Aorta (tissue), 5 donors: ENCODE measurements at regions of chr11 and their contacts with region 1.

Region 1: DNA sequence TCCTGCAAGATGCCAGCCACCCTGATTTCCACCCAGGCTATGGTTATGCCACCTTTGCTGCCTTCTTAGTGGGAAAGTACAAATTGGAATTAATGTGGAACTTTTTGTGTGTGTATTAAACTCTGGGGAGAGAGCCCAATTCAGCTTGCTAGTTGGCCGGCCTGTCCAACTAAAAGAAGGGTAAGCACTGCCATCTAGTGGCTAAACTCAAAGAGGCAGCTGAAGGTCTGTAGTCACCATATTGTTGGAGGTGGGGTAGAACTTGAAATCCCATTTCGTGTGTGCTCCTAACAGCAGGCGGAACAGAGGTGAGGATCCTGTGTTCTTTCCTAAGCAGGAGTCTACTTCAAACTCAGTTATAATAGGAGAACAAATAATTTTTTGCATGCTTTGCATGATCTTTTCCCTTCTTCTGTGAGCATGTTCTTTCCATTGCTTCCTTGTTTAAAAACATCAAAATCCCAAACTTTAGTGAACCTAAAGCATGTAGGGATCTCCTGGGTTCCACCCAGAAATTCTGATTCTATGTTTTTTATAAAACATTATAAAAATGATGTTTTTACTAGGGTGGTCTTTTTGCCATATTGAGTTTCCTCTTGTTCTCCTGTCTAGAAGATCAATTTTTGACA is 138.8 kb upstream of the SORL1-AS1 start:
- DNase-seq: peak in 1 of 2 donors; percentile 60
- ATAC-seq: peak; percentile 85
- H3K4me3 ChIP-seq: no peak overlapping the region
- H3K27ac ChIP-seq: no peak overlapping the region
- H3K4me1 ChIP-seq: no peaks in the 10 kb centered on the region
- H3K27me3 ChIP-seq: no peaks in the 10 kb centered on the region

Region 2: DNA sequence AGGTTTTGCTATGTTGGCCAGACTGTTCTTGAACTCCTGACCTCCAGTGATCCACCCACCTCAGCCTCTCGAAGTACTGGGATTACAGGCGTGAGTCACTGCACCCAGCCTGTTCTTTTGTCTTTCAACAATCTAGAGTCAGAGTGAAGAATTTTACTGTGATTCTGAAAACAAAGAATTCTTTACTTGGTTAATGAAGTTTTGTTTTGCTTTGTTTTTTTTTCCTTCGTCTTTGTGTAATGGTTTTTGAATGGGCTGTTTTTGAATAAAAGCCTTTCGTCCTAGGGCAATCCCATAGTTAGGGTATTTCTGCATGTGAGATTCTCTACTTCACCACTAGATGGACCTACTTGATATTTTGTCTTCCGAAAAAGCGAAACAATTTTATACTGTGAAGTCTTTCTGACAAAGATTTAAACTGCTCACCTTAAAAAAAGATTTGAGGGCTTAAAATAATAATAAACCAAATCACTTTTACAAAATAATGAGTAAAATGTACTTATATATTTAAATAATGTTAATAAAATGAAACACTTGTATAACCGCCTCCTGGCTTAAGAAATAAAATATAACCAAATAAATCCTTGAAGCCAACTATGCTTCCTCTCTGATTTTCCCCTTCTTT is 342.4 kb before region 1 on chr11:
- intact Hi-C with region 1: loop called (anchors 2 to 5 kb)
- DNase-seq: no peak
- ATAC-seq: no peak
- H3K4me3 ChIP-seq: no peak overlapping the region
- H3K27ac ChIP-seq: no peak overlapping the region
- H3K4me1 ChIP-seq: no peaks in the 10 kb centered on the region
- H3K27me3 ChIP-seq: peaks cover 0 to 3% of the 10 kb centered on the region in 2 donors

Region 3: GRCh38 chr11:121634889-121635288 is 43.4 kb after region 1 on chr11:
- intact Hi-C with region 1: no loop called
- DNase-seq: no peak
- ATAC-seq: no peak
- H3K4me3 ChIP-seq: no peak overlapping the region
- H3K27ac ChIP-seq: no peak overlapping the region
- H3K4me1 ChIP-seq: peaks cover 0 to 2% of the 10 kb centered on the region in 2 donors
- H3K27me3 ChIP-seq: no peaks in the 10 kb centered on the region